ENCODE measurements at regions of chr4 and their contacts with region 1.

Region 1: DNA sequence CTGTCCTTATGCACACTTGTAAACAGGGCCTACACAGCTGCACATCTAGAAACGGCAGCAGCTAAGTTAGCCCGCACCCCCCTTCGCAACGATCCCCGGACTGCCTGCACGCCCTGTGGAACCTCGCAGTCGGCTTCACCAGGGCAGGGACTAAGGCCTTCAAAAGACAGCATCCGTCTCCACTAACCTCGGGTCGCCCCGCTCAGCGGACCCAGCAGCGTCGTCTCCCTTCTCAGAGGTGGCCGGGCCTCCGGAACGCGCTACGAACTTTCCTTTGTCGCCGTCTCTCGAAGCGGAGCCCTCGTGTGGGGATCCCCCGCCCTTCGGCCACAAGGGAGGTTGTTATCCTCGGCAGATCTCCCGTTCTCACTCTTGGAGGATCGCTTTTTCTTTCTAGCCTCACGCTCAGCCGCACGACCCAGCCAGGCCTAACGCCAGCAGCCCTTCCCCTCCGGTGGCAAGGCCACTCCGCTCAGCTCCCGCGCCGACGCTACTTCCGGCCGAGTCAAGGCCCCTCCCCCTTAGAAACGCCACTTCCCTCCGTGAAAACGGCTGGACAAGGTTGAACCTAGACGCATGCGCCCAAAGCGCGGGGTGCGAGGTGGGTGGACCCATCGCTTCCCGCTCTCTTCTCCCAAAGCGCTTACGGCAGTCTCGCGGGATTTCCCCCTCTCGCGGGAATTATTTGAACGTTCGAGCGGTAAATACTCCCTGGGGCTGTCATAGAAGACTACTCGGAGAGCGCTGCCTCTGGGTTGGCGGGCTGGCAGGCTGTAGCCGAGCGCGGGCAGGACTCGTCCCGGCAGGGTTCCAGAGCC is at the starts of genes DCAF16 and NCAPG:
- DNase-seq: peak; percentile 100
- H3K4me3 Mint-ChIP-seq: peak within 1 kb of the TSS; percentile 100
- H3K27ac Mint-ChIP-seq: peak within 1 kb of the TSS; percentile 99
- H3K4me1 Mint-ChIP-seq: peaks cover 41% of the 10 kb centered on the region
- H3K27me3 Mint-ChIP-seq: no peaks in the 10 kb centered on the region
- total RNA-seq, gene DCAF16: 46.6 to 48.5 TPM
- total RNA-seq, gene NCAPG: 70.2 to 78.4 TPM

Region 2: DNA sequence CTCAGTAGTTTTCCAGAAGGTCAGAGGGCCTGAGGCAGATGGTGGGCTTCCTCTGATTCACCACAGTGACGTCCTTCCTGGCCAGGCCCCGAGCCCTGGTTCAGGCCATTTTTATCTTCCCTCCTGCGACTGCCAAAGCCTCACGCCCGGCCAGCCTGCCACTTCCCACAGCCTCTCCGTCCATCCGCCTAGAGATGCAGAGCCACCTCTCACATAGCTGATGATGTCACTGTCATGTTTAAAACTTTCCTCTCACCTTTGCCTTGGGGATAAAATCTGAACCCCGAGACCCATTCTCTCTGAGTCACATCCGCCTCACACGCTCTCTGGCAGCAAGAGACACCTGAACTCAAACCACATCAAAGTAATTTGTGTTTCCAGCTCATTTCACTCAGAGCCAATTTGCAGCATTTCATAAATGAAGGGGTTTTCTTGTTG is 473.9 kb before region 1 on chr4:
- CTCF ChIA-PET with region 1: no interaction called
- intact Hi-C with region 1: loop called (anchors 2 kb)
- DNase-seq: peak; percentile 88
- H3K4me3 Mint-ChIP-seq: peak overlapping the region; percentile 22
- H3K27ac Mint-ChIP-seq: peak overlapping the region; percentile 87
- H3K4me1 Mint-ChIP-seq: peaks cover 50% of the 10 kb centered on the region
- H3K27me3 Mint-ChIP-seq: no peaks in the 10 kb centered on the region

Region 3: DNA sequence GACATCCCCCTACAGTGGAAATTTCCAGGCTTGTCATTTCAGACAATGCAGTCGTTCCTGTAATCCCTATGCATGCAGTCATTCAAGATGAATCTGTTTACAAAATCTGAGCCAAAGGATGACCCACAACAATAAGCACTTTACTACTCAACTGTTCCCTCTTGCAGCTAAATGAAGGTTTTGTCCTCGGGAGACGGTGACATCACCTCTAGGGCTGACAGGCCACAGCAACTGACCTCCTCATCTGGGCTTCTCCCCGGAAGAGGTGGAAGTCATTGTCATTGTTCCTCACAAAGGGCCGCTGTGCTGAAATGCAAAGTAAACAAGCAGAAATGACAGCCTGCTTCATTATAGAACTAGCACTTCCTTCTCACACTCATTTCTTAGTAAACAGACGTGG is 266.3 kb before region 1 on chr4:
- CTCF ChIA-PET with region 1: interaction called, 31 read pairs
- intact Hi-C with region 1: loop called (anchors 1 kb)
- DNase-seq: no peak
- H3K4me3 Mint-ChIP-seq: no peak overlapping the region
- H3K27ac Mint-ChIP-seq: no peak overlapping the region
- H3K4me1 Mint-ChIP-seq: no peaks in the 10 kb centered on the region
- H3K27me3 Mint-ChIP-seq: peaks cover 6% of the 10 kb centered on the region

Region 4: GRCh38 chr4:17599826-17600225 is 210.6 kb before region 1 on chr4:
- CTCF ChIA-PET with region 1: no interaction called
- intact Hi-C with region 1: no loop called
- DNase-seq: no peak
- H3K4me3 Mint-ChIP-seq: no peak overlapping the region
- H3K27ac Mint-ChIP-seq: no peak overlapping the region
- H3K4me1 Mint-ChIP-seq: no peaks in the 10 kb centered on the region
- H3K27me3 Mint-ChIP-seq: no peaks in the 10 kb centered on the region

Region 5: GRCh38 chr4:17614416-17615299 is 195.8 kb before region 1 on chr4 and contains the start of gene MED28:
- CTCF ChIA-PET with region 1: interaction called, 3 read pairs
- intact Hi-C with region 1: loop called (anchors 1 kb)
- DNase-seq: peak; percentile 98
- H3K4me3 Mint-ChIP-seq: peak within 1 kb of the TSS; percentile 98
- H3K27ac Mint-ChIP-seq: peak within 1 kb of the TSS; percentile 85
- H3K4me1 Mint-ChIP-seq: peaks cover 49% of the 10 kb centered on the region
- H3K27me3 Mint-ChIP-seq: no peaks in the 10 kb centered on the region
- total RNA-seq, gene MED28: 52.3 to 59.5 TPM

Region 6: DNA sequence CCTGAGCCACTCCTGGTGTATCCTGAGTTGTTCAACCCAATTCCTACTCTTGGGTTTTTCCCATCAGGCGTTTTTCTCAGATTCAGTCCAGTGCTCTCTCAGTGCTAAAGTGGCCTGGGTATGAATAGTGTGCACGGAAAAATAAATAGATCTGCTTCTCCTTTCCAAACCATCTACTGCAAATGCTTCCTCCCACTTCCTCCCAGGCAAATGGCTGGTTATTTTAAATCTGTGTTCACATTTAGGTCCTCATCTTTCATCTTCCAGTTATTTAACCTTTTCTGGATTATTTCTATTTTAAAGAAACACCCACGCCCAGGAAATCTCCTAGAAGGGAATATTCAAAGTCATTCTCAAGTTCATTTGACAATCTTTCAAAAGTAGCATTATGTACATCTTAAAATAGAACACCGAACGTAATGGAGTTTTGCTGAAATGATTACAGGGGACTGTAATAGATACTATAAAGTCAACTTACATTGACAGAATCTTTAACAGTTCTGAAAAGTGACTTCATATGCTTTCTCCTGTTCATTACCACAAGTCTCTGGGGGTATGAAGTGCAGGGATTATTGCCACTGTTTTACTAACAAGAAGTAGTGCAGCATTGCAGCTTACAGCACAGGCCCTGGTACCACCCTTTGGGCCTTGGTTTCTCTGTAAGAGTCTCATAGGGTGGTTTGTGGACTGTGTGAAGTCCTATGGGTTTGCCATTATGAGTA is 129.7 kb before region 1 on chr4:
- CTCF ChIA-PET with region 1: no interaction called
- intact Hi-C with region 1: no loop called
- DNase-seq: no peak
- H3K4me3 Mint-ChIP-seq: no peak overlapping the region
- H3K27ac Mint-ChIP-seq: no peak overlapping the region
- H3K4me1 Mint-ChIP-seq: no peaks in the 10 kb centered on the region
- H3K27me3 Mint-ChIP-seq: peaks cover 3% of the 10 kb centered on the region

Region 7: DNA sequence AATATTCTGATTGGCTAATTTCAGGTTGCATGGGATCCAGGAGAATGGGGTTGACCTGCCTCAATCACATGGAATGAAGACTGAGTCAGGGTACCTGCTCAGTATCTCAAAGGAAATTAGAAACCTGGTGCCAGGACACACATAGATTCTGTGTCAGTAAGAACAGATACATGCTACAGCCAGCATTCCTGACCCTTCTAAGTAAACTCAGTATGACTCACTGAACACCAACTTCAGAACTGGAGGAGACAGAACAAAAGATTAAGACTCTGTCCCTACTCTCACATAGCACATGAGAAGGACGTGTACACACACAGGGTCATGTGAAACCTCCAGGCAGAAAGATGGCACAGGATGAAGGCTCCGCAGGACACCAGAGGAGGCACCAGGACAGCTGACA is 83.5 kb before region 1 on chr4:
- CTCF ChIA-PET with region 1: no interaction called
- intact Hi-C with region 1: no loop called
- DNase-seq: no peak
- H3K4me3 Mint-ChIP-seq: no peak overlapping the region
- H3K27ac Mint-ChIP-seq: no peak overlapping the region
- H3K4me1 Mint-ChIP-seq: no peaks in the 10 kb centered on the region
- H3K27me3 Mint-ChIP-seq: peaks cover 14% of the 10 kb centered on the region

Region 8: DNA sequence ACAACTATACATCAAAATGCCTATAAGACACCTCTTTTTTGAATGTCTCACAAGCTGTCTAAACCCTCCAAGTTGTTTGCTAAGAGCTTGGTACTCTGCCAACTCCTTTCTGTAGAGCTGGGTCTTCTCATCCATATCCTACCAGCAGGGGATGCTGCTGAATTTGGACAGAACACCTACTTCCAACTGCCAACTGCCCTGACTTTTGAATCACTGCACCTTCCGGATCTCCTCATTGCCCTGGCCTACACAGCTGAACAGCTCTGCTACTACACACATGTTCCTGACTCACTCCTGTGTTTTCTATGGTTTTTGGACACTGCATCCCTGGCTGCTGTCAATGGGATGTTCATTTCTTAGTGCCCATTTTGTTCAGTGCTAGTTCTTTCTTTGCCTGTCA is 47.7 kb before region 1 on chr4:
- CTCF ChIA-PET with region 1: interaction called, 4 read pairs
- intact Hi-C with region 1: loop called (anchors 1 kb)
- DNase-seq: peak; percentile 17
- H3K4me3 Mint-ChIP-seq: no peak overlapping the region
- H3K27ac Mint-ChIP-seq: no peak overlapping the region
- H3K4me1 Mint-ChIP-seq: peaks cover 5% of the 10 kb centered on the region
- H3K27me3 Mint-ChIP-seq: peaks cover 3% of the 10 kb centered on the region

Region 9: GRCh38 chr4:17797808-17798207 is 12.7 kb before region 1 on chr4:
- CTCF ChIA-PET with region 1: interaction called, 22 read pairs
- intact Hi-C with region 1: no loop called
- DNase-seq: no peak
- H3K4me3 Mint-ChIP-seq: no peak overlapping the region
- H3K27ac Mint-ChIP-seq: no peak overlapping the region
- H3K4me1 Mint-ChIP-seq: peaks cover 12% of the 10 kb centered on the region
- H3K27me3 Mint-ChIP-seq: no peaks in the 10 kb centered on the region

Region 10: DNA sequence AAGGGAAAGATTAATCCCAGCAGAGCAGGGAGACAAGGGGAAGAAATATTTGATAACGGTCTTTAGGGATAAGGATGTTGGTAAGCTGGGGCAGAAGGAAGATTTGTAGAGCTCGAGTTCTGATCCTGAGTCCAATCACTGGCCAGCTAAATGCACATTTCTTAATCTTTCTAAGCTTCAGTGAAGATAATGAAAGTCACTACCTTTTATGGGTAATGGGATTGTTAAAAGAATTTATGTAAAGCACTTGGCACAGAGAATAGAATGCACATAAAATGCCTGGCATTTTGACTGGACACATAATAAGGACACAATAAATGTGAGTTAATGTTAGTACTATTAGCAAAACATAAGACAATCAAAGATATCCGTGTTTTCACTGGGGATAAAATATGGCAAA is 43.6 kb after region 1 on chr4:
- CTCF ChIA-PET with region 1: no interaction called
- intact Hi-C with region 1: no loop called
- DNase-seq: no peak
- H3K4me3 Mint-ChIP-seq: no peak overlapping the region
- H3K27ac Mint-ChIP-seq: no peak overlapping the region
- H3K4me1 Mint-ChIP-seq: no peaks in the 10 kb centered on the region
- H3K27me3 Mint-ChIP-seq: no peaks in the 10 kb centered on the region